ENCODE measurements at regions of chr4 and their contacts with region 1.

Region 1: DNA sequence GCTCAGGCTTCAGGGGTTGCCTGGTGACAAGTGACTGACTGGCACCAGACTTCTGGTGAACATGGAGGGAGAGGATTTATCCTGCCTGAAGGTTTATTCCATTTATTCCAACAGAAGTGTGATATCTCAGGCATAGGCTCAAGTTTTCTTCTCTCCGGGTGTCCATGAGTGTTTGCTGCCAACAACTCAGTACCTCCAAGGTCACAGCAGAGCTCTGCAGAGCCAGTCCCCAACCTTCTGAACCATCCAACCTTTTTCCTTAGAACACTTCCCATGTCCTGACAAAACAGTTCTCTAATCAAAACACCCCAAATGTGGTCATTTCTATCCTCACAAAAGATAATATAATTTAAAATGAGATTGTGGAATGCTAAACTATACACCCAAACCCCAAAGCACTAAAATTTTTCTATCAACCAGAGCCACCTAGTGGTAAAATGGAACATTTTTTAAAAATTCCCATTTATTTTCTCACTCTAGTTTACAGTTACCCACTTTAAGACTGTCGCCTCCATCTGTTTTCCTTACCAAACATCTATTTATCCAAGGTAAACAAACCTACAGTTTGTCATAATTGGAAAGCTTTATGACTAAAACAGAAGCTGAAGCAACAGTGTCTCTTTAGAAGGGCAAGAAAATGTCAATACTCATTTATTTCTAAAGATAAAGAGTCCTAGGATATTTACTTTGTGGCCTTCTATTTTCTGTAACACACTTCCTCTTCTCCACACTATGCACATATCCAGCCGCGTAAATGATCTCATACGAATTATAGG is 39.6 kb downstream of the TMEM154 start:
- DNase-seq: peak; percentile 61
- ATAC-seq: peak; percentile 90
- H3K4me3 ChIP-seq: no peak overlapping the region
- H3K27ac ChIP-seq: no peak overlapping the region
- H3K4me1 ChIP-seq: no peaks in the 10 kb centered on the region
- H3K27me3 ChIP-seq: no peaks in the 10 kb centered on the region
- CTCF ChIP-seq: peak; percentile 71

Region 2: DNA sequence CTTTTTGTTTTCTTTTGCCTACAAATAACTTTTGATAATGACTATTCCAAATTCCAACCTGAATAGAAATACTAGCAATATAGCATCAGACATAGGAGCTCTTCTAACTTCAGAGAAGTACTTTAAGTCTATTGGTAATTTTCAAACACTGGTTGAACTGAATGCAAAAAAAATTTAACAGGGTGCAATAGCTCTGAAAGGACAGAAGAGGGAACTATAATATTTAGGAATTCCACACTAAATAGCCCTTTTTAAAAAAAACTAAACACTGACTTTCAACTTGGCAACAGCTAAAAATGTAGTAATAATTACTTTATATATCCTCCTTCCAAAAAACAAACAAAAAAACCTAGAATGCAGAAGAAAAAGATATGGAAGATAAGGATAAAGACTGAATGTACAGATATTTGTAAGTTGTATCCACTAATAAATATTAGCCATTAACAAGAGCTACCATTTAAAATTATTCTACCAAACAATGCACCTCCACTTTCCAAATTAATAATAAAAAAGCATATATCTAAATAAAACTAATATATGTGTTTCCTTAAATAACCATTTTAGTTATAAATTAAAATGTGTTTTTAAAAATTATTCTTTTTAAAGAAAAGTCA is 185.7 kb before region 1 on chr4:
- CTCF ChIA-PET with region 1: interaction called, 4 read pairs
- POLR2A ChIA-PET with region 1: interaction called, 5 read pairs
- intact Hi-C with region 1: loop called (anchors 1 kb)
- DNase-seq: peak; percentile 53
- ATAC-seq: no peak
- H3K4me3 ChIP-seq: no peak overlapping the region
- H3K27ac ChIP-seq: no peak overlapping the region
- H3K4me1 ChIP-seq: peaks cover 18% of the 10 kb centered on the region
- H3K27me3 ChIP-seq: no peaks in the 10 kb centered on the region
- CTCF ChIP-seq: peak; percentile 78

Region 3: GRCh38 chr4:152500800-152501434 is 139.3 kb before region 1 on chr4:
- CTCF ChIA-PET with region 1: no interaction called
- POLR2A ChIA-PET with region 1: no interaction called
- intact Hi-C with region 1: loop called (anchors 1 kb)
- DNase-seq: peak; percentile 90
- ATAC-seq: peak; percentile 73; the same call in 1 of the 2 replicates
- H3K4me3 ChIP-seq: no peak overlapping the region
- H3K27ac ChIP-seq: no peak overlapping the region
- H3K4me1 ChIP-seq: no peaks in the 10 kb centered on the region
- H3K27me3 ChIP-seq: no peaks in the 10 kb centered on the region
- CTCF ChIP-seq: peak; percentile 84

Region 4: GRCh38 chr4:152535903-152536544 is 104.2 kb before region 1 on chr4 and contains the start of gene FBXW7:
- CTCF ChIA-PET with region 1: no interaction called
- POLR2A ChIA-PET with region 1: no interaction called
- intact Hi-C with region 1: loop called (anchors 2 kb)
- DNase-seq: peak; percentile 98
- ATAC-seq: peak; percentile 88
- H3K4me3 ChIP-seq: peak within 1 kb of the TSS; percentile 99
- H3K27ac ChIP-seq: peak within 1 kb of the TSS; percentile 90
- H3K4me1 ChIP-seq: peaks cover 28% of the 10 kb centered on the region
- H3K27me3 ChIP-seq: no peaks in the 10 kb centered on the region
- CTCF ChIP-seq: no peak
- total RNA-seq, gene FBXW7: 17.4 and 24.3 TPM in 2 replicates

Region 5: GRCh38 chr4:152831416-152831815 is 191.2 kb after region 1 on chr4:
- CTCF ChIA-PET with region 1: no interaction called
- POLR2A ChIA-PET with region 1: no interaction called
- intact Hi-C with region 1: no loop called
- DNase-seq: peak; percentile 11
- ATAC-seq: no peak
- H3K4me3 ChIP-seq: no peak overlapping the region
- H3K27ac ChIP-seq: no peak overlapping the region
- H3K4me1 ChIP-seq: no peaks in the 10 kb centered on the region
- H3K27me3 ChIP-seq: no peaks in the 10 kb centered on the region
- CTCF ChIP-seq: no peak